Ascending aorta (tissue), 2 donors: ENCODE measurements at regions of chr19 and their contacts with region 1.

Region 1: GRCh38 chr19:11987405-11988281 is 22.8 kb downstream of the ZNF763 start:
- DNase-seq: peak; percentile 90 to 98
- H3K4me3 ChIP-seq: peak overlapping the region; percentile 80 to 92
- H3K27ac ChIP-seq: peak overlapping the region; percentile 83 to 88
- H3K4me1 ChIP-seq: no peaks in the 10 kb centered on the region
- H3K27me3 ChIP-seq: no peaks in the 10 kb centered on the region
- CTCF ChIP-seq: no peak

Region 2: GRCh38 chr19:11814029-11814699 is 173.5 kb before region 1 on chr19 and contains the start of gene ZNF440:
- intact Hi-C with region 1: loop called (anchors 1 kb)
- DNase-seq: peak; percentile 85 to 98
- H3K4me3 ChIP-seq: peak within 1 kb of the TSS; percentile 84 to 90
- H3K27ac ChIP-seq: peak within 1 kb of the TSS; percentile 85 to 93
- H3K4me1 ChIP-seq: peaks cover 0 to 3% of the 10 kb centered on the region in 2 donors
- H3K27me3 ChIP-seq: no peaks in the 10 kb centered on the region
- CTCF ChIP-seq: no peak
- total RNA-seq, gene ZNF440: 1.1 TPM

Region 3: GRCh38 chr19:11881151-11881800 is 106.4 kb before region 1 on chr19:
- intact Hi-C with region 1: loop called (anchors 1 kb)
- DNase-seq: no peak
- H3K4me3 ChIP-seq: no peak overlapping the region
- H3K27ac ChIP-seq: no peak overlapping the region
- H3K4me1 ChIP-seq: no peaks in the 10 kb centered on the region
- H3K27me3 ChIP-seq: no peaks in the 10 kb centered on the region
- CTCF ChIP-seq: peak; percentile 37 to 63 (median 47)

Region 4: GRCh38 chr19:11902228-11902627 is 85.4 kb before region 1 on chr19:
- intact Hi-C with region 1: no loop called
- DNase-seq: no peak
- H3K4me3 ChIP-seq: no peak overlapping the region
- H3K27ac ChIP-seq: no peak overlapping the region
- H3K4me1 ChIP-seq: no peaks in the 10 kb centered on the region
- H3K27me3 ChIP-seq: no peaks in the 10 kb centered on the region
- CTCF ChIP-seq: no peak

Region 5: GRCh38 chr19:11924886-11925650 is 62.6 kb before region 1 on chr19 and contains the start of gene ZNF700:
- intact Hi-C with region 1: loop called (anchors 1 kb)
- DNase-seq: peak; percentile 77 to 97
- H3K4me3 ChIP-seq: peak within 1 kb of the TSS; percentile 84 to 88
- H3K27ac ChIP-seq: peak within 1 kb of the TSS; percentile 92 to 93
- H3K4me1 ChIP-seq: peaks cover 3 to 10% of the 10 kb centered on the region in 2 donors
- H3K27me3 ChIP-seq: no peaks in the 10 kb centered on the region
- CTCF ChIP-seq: no peak
- total RNA-seq, gene ZNF700: 4.4 TPM

Region 6: GRCh38 chr19:12035220-12036153 is 47.8 kb after region 1 on chr19 and contains the start of gene ZNF433:
- intact Hi-C with region 1: loop called (anchors 2 kb)
- DNase-seq: peak; percentile 75 to 97
- H3K4me3 ChIP-seq: peak within 1 kb of the TSS; percentile 68 to 74
- H3K27ac ChIP-seq: peak within 1 kb of the TSS; percentile 74 to 84
- H3K4me1 ChIP-seq: peaks cover 0 to 5% of the 10 kb centered on the region in 2 donors
- H3K27me3 ChIP-seq: no peaks in the 10 kb centered on the region
- CTCF ChIP-seq: no peak
- total RNA-seq, gene ZNF433: not detected